Activated B cell treated with CpG ODN at 0.5 μM for 24 hours (primary cell): ENCODE measurements at regions of chr9 and their contacts with region 1.

Region 1: GRCh38 chr9:89815903-89816573 is 211.2 kb downstream of the GADD45G start:
- DNase-seq: peak; percentile 65
- ATAC-seq: peak; percentile 95
- H3K4me3 Mint-ChIP-seq: peak overlapping the region; percentile 21
- H3K27ac Mint-ChIP-seq: peak overlapping the region; percentile 83
- H3K4me1 Mint-ChIP-seq: peaks cover 52% of the 10 kb centered on the region
- H3K27me3 Mint-ChIP-seq: no peaks in the 10 kb centered on the region
- CTCF ChIP-seq: no peak

Region 2: GRCh38 chr9:89310475-89311346 is 505.3 kb before region 1 on chr9 and contains the start of gene CKS2:
- CTCF ChIA-PET with region 1: no interaction called
- POLR2A ChIA-PET with region 1: no interaction called
- intact Hi-C with region 1: loop called (anchors 2 kb)
- DNase-seq: peak; percentile 98
- ATAC-seq: peak; percentile 88
- H3K4me3 Mint-ChIP-seq: peak within 1 kb of the TSS; percentile 96
- H3K27ac Mint-ChIP-seq: peak within 1 kb of the TSS; percentile 99
- H3K4me1 Mint-ChIP-seq: peaks cover 48% of the 10 kb centered on the region
- H3K27me3 Mint-ChIP-seq: no peaks in the 10 kb centered on the region
- CTCF ChIP-seq: no peak
- total RNA-seq, gene CKS2: 23.7 and 23.9 TPM in 2 replicates

Region 3: DNA sequence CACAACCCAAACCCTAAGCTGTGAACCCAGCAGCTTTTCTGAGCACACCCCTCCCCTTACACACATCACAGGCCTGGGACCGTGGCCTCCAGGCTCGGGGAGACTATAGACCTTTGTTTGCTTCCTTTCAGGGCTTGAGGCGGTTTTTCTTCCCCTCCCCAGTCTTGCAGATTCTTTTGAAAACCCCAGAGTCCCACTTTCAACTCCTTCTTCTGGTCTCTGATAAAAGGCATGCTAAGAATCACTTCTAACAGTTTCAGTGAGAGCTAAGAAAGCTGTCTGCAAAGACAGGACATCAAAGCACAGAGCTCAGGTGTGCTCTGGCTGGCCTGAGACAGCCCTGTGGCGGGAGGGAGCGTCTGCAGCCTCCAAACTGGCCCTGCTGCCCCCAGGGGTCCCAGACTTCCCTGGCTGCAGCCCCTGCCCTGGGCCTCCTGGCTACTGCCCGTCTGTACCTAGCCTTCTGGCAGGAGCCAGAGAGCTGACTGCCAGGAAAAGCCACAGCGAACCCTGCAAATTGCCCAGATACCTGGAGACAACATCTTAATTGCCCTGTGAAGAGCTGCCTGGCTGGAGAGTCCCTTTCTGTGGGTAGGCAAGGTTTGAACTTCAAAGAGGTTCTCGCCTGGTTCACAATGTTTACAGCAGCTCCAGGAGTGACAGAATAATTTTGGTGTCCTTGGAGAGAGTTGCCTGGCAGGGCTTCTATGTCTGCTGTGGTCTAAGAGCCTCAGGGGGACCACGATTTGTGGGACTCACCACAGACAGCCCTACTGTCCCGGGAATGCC is 72.3 kb before region 1 on chr9:
- CTCF ChIA-PET with region 1: interaction called, 3 read pairs
- POLR2A ChIA-PET with region 1: interaction called, 4 read pairs
- intact Hi-C with region 1: loop called (anchors 5 kb)
- DNase-seq: no peak
- ATAC-seq: peak; percentile 15
- H3K4me3 Mint-ChIP-seq: no peak overlapping the region
- H3K27ac Mint-ChIP-seq: peak overlapping the region; percentile 65
- H3K4me1 Mint-ChIP-seq: peaks cover 60% of the 10 kb centered on the region
- H3K27me3 Mint-ChIP-seq: no peaks in the 10 kb centered on the region
- CTCF ChIP-seq: no peak

Region 4: DNA sequence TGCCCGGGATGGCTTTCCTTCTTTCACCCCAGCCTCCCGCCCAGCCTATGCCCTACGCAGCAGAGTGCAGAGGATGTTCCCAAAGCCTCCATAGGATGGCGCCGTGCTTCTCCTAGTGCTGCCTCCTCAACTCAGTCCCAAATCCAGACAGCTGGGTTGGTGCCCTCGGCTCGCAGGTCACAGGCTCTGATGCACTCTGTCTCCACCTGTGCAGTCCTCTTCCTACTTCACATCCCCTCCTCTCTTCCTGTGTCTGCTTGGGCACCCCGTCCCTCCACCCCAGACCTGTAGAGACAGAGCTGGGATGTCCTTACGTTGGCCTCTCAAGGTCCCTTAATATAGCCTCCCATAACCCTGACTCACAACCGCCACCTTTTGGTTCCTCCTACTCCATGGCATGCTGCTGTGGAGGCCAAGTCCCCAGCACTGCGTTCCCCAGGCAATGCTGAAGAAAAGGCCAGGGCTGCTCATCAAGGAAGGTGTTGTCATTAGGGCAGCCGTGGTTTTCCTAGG is 103.2 kb after region 1 on chr9:
- CTCF ChIA-PET with region 1: no interaction called
- POLR2A ChIA-PET with region 1: no interaction called
- intact Hi-C with region 1: loop called (anchors 5 kb)
- DNase-seq: no peak
- ATAC-seq: peak; percentile 82
- H3K4me3 Mint-ChIP-seq: no peak overlapping the region
- H3K27ac Mint-ChIP-seq: no peak overlapping the region
- H3K4me1 Mint-ChIP-seq: peaks cover 8% of the 10 kb centered on the region
- H3K27me3 Mint-ChIP-seq: peaks cover 3% of the 10 kb centered on the region
- CTCF ChIP-seq: no peak

Region 5: DNA sequence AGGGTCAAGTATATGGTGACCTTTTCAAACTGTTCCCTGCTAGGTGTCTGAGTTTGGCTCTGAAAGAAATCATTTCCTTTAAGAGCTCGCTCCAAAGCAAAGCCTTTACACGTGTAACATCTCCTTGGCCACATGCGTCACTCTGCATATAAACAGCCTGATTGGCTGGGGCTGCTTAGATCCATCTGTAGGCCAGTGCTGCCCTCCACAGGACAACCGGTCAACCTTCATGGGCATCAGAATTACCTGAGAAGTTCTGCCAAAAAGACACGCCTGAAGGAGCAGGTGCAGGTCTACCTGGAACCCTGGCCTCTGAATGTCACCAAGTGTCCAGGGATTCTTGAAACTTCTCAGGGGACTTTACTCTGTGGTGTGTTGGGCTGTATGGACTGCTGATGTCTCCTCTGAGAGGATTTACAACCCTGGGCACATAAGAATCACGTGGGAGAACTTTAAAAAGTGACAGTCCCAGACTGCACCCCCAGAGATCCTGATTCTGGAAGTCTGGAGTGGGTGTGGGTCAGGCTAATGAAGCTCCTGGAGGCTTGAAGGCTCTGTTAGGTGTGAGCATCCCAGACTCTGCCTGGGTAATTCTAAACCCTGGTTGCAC is 286.4 kb after region 1 on chr9:
- CTCF ChIA-PET with region 1: no interaction called
- POLR2A ChIA-PET with region 1: no interaction called
- intact Hi-C with region 1: loop called (anchors 1 kb)
- DNase-seq: peak; percentile 56
- ATAC-seq: peak; percentile 100
- H3K4me3 Mint-ChIP-seq: no peak overlapping the region
- H3K27ac Mint-ChIP-seq: no peak overlapping the region
- H3K4me1 Mint-ChIP-seq: peaks cover 6% of the 10 kb centered on the region
- H3K27me3 Mint-ChIP-seq: no peaks in the 10 kb centered on the region
- CTCF ChIP-seq: peak; percentile 73